GM23248 (cell line): ENCODE measurements at regions of chr12 and their contacts with region 1.

Region 1: GRCh38 chr12:7679251-7680045 is 13.7 kb upstream of the APOBEC1 start:
- DNase-seq: no peak
- H3K4me3 ChIP-seq: no peak overlapping the region
- H3K27ac ChIP-seq: no peak overlapping the region
- H3K4me1 ChIP-seq: no peaks in the 10 kb centered on the region
- H3K27me3 ChIP-seq: peaks cover 5% of the 10 kb centered on the region

Region 2: DNA sequence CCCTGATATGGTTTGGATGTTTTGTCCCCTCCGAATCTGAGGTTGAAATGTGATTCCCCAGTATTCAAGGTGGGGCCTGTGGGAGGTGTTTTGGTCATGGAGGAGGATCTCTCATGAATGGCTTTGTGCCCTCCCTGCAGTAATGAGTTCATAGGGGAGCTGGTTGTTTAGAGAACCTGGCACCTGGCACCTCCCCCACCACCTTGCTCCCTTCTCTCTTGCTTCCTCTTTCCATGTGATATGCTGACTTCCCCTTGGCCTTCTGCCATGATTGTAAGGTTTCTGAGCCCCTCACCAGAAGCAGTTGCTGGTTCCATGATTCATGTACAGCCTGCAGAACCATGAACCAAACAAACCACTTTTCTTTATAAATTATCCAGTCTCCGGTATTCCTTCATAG is 268.1 kb before region 1 on chr12:
- in situ Hi-C with region 1: no loop called
- DNase-seq: no peak
- H3K4me3 ChIP-seq: no peak overlapping the region
- H3K27ac ChIP-seq: no peak overlapping the region
- H3K4me1 ChIP-seq: no peaks in the 10 kb centered on the region
- H3K27me3 ChIP-seq: peaks cover 14% of the 10 kb centered on the region; the same call in 1 of the 2 replicates

Region 3: GRCh38 chr12:7486512-7486911 is 192.9 kb before region 1 on chr12:
- in situ Hi-C with region 1: no loop called
- DNase-seq: no peak
- H3K4me3 ChIP-seq: no peak overlapping the region
- H3K27ac ChIP-seq: no peak overlapping the region
- H3K4me1 ChIP-seq: no peaks in the 10 kb centered on the region
- H3K27me3 ChIP-seq: no peaks in the 10 kb centered on the region

Region 4: DNA sequence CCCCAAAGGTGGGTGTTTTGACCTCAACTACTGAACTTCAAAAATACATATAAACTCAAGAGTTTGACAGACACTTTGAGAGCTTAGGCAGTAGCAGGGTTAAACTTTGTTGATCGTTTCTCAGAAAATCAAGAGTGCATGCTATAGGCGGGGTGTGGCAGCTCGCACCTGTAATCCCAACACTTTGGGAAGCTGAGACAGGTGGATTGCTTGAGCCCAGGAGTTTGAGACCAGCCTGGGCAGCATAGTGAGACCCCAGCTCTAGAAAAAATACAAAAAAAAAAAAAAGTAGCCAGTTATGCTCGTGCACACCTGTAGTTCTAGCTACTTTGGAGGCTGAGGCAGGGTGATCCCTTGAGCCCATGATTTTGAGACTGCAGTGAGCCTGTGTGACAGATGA is 122.0 kb after region 1 on chr12:
- in situ Hi-C with region 1: loop called (anchors 5 kb)
- DNase-seq: no peak
- H3K4me3 ChIP-seq: no peak overlapping the region
- H3K27ac ChIP-seq: no peak overlapping the region
- H3K4me1 ChIP-seq: peaks cover 13% of the 10 kb centered on the region; the same call in 1 of the 2 replicates
- H3K27me3 ChIP-seq: no peaks in the 10 kb centered on the region

Region 5: DNA sequence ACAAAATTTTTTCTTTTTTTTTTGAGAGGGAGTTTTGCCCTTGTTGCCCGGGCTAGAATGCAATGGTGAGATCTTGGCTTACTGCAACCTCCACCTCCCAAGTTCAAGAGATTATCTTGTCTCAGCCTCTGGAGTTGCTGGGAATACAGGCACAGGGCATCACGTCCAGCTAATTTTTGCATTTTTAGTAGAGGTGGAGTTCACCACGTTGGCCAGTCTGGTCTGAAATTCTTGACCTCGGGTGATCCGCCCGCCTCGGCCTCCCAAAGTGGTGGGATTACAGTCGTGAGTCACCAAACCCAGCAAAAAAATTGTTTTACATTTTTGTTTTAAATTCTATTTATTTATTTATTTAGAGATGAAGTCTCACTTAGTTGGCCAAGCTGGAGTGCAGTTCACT is 198.0 kb after region 1 on chr12:
- in situ Hi-C with region 1: no loop called
- DNase-seq: no peak
- H3K4me3 ChIP-seq: no peak overlapping the region
- H3K27ac ChIP-seq: no peak overlapping the region
- H3K4me1 ChIP-seq: no peaks in the 10 kb centered on the region
- H3K27me3 ChIP-seq: 0 out of 2 replicates have a peak, but pooled peaks cover 5% of the 10 kb centered on the region